ENCODE measurements at regions of chr11 and their contacts with region 1.

Region 1: GRCh38 chr11:105244160-105244820 is 104.7 kb upstream of the CARD18 start:
- DNase-seq: peak in 1 of 4 donors; percentile 19
- ATAC-seq: peak; percentile 74
- H3K4me3 ChIP-seq: no peak overlapping the region
- H3K27ac ChIP-seq: peak overlapping the region in 1 of 2 donors; percentile 26
- H3K4me1 ChIP-seq: no peaks in the 10 kb centered on the region
- H3K27me3 ChIP-seq: no peaks in the 10 kb centered on the region
- CTCF ChIP-seq: no peak

Region 2: DNA sequence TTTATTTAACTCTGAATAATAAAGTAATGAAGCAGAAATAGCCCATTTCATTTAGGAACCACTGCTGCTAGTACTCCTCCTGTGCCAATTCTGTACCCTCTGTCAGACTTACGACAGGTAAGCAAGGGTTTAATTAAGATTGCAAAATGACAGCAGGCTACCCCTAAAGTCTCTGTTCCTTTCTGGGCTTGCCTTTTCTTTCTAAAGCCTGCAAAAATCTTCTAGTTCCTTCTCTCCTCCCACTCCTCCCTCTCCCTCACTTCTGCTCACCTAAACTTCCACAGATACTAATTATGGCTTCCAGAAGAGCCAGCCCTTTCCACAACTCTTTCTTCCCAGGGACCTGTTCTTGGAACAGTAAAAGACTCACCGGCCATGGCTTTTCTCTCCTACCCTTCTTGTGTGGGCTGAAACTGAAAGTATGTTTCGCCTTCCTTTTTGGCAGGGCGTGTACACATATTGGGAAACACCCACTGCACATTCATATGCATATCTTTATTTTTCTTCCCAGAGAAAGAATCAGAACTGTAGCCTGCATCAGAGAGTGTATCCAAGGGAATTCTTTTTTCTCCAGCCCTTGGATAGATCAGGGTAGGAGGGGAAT is 199.3 kb before region 1 on chr11 and contains the start of gene CARD16:
- intact Hi-C with region 1: loop called in 1 of 2 experiments (anchors 10 kb)
- DNase-seq: peak in 3 of 4 donors; percentile 44 to 75 (median 55)
- ATAC-seq: peak; percentile 86
- H3K4me3 ChIP-seq: peak within 1 kb of the TSS; percentile 24 to 56
- H3K27ac ChIP-seq: peak within 1 kb of the TSS; percentile 81 to 88
- H3K4me1 ChIP-seq: peaks cover 12 to 58% of the 10 kb centered on the region in 2 donors
- H3K27me3 ChIP-seq: no peaks in the 10 kb centered on the region
- CTCF ChIP-seq: no peak
- polyA plus RNA-seq, gene CARD16: 17.7 to 26.6 (median 22.3) TPM